ENCODE measurements at regions of chrX and their contacts with region 1.

Region 1: DNA sequence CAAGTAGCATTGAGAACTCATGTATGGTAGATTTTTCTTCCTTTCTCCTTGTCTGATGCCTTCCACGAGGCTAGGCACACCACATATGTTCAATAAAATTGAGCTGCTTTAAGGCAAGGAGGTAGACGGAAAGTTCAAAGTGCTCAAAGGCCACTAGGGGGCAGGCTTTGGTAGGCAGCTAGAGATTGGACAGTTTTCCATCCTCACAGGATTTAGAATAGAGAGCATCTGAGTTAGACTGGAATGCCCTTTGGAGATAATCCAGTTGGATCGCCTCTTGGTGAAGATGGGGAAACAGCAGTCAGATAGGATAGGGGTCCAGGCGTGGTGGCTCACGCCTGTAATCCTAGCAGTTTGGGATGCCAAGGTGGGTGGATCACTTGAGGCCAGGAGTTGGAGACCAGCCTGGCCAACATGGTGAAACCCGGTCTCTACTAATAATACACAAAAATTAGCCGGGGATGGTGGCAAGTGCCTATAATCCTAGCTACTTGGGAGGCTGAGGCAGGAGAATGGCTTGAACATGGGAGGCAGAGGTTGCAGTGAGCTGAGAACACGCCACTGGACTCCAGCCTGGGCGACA is 30.4 kb downstream of the ELF4 start:
- DNase-seq: peak in 3 of 6 donors; percentile 25 to 60 (median 44)
- ATAC-seq: peak; percentile 77 to 84 (median 80)
- H3K4me3 ChIP-seq: no peak overlapping the region
- H3K27ac ChIP-seq: no peak overlapping the region
- H3K4me1 ChIP-seq: no peaks in the 10 kb centered on the region
- H3K27me3 ChIP-seq: no peaks in the 10 kb centered on the region
- CTCF ChIP-seq: peak; percentile 62 to 76 (median 68)

Region 2: GRCh38 chrX:130179579-130180215 is 99.8 kb after region 1 on chrX:
- intact Hi-C with region 1: loop called in 1 of 3 experiments (anchors 10 kb)
- DNase-seq: no peak
- ATAC-seq: no peak
- H3K4me3 ChIP-seq: no peak overlapping the region
- H3K27ac ChIP-seq: no peak overlapping the region
- H3K4me1 ChIP-seq: no peaks in the 10 kb centered on the region
- H3K27me3 ChIP-seq: peaks cover 0 to 4% (median 2%) of the 10 kb centered on the region in 4 donors
- CTCF ChIP-seq: no peak

Region 3: GRCh38 chrX:130190801-130191200 is 110.9 kb after region 1 on chrX:
- intact Hi-C with region 1: loop called (anchors 5 to 10 kb)
- DNase-seq: no peak
- ATAC-seq: no peak
- H3K4me3 ChIP-seq: no peak overlapping the region
- H3K27ac ChIP-seq: no peak overlapping the region
- H3K4me1 ChIP-seq: no peaks in the 10 kb centered on the region
- H3K27me3 ChIP-seq: peaks cover 0 to 6% (median 0%) of the 10 kb centered on the region in 4 donors
- CTCF ChIP-seq: no peak

Region 4: GRCh38 chrX:130196466-130196865 is 116.6 kb after region 1 on chrX:
- intact Hi-C with region 1: loop called in 2 of 3 experiments (anchors 5 to 10 kb)
- DNase-seq: no peak
- ATAC-seq: no peak
- H3K4me3 ChIP-seq: no peak overlapping the region
- H3K27ac ChIP-seq: no peak overlapping the region
- H3K4me1 ChIP-seq: no peaks in the 10 kb centered on the region
- H3K27me3 ChIP-seq: peaks cover 0 to 6% (median 0%) of the 10 kb centered on the region in 4 donors
- CTCF ChIP-seq: no peak